Cardiac septum (tissue), 1 donor: ENCODE measurements at regions of chr21 and their contacts with region 1.

Region 1: DNA sequence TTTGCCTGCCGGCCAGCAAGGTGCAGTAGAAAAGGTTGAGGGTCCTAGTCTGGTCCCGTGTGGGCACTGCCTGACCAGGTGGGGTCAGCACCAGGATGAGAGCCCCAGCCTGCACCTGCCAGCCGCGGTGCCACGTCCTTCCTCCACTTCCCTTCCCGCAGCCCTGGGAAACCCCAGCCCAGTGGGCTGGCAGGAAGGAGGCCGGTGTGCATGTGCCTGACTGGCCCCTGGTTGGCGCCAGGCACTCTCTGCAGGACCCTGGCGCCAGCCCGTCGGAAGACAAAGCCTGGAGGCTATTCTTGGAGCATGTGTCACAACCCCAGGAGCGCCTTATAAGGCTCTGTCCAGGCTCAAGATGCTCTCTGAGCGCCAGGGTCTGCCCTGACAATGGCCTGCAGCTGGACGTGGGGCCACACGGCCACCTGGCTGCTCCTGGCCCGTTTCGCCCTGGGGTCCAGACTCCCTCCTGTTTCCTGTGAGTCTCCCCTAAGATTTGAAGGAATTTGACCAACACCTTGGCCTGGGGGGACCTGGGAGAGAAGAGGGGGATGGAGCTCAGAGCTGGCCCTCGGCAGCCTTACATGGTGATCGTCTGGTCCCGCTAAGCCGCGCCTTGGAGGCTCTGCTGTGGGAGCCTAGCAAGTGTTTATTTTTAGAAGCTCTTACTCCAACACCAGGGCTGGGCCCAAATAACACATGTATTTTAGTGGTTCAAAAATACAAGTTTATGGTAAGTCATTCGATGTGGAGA is 31.9 kb upstream of the POFUT2 start:
- DNase-seq: peak; percentile 88

Region 2: DNA sequence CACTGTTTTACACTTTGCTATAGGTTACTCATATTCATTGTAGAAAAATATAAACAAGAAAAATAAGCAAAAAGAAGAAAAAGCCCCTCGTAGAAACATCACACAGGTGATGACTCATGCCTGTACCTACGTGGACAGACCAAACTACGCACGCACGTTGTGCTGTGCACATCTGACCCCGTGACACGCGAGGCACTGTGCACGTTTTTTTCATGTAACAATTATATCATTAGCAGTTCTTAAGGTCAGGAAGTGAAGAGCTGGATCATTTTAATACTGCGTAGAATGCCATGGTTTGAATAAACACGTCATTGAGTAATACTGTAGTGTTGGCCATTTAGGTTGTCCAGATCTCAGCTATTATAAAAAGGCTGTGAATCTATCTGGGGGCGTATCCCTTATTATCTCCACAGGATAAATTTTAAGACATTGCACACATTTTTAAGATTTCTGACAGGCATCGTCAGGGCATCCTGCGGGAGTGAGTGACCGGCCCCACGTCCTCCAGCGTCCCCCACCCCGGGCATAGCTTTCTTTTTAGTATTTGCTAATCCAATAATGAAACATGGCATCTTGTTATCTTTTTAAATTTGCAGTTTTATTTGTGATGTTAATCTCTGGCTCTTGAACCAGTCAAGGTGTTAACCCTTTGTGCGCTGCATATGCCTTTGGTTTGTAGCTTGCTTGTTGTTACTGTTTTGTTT is 268.7 kb before region 1 on chr21:
- intact Hi-C with region 1: no loop called
- DNase-seq: no peak

Region 3: GRCh38 chr21:45302078-45303055 is 17.3 kb before region 1 on chr21:
- intact Hi-C with region 1: loop called (anchors 2 kb)
- DNase-seq: peak; percentile 88

Region 4: DNA sequence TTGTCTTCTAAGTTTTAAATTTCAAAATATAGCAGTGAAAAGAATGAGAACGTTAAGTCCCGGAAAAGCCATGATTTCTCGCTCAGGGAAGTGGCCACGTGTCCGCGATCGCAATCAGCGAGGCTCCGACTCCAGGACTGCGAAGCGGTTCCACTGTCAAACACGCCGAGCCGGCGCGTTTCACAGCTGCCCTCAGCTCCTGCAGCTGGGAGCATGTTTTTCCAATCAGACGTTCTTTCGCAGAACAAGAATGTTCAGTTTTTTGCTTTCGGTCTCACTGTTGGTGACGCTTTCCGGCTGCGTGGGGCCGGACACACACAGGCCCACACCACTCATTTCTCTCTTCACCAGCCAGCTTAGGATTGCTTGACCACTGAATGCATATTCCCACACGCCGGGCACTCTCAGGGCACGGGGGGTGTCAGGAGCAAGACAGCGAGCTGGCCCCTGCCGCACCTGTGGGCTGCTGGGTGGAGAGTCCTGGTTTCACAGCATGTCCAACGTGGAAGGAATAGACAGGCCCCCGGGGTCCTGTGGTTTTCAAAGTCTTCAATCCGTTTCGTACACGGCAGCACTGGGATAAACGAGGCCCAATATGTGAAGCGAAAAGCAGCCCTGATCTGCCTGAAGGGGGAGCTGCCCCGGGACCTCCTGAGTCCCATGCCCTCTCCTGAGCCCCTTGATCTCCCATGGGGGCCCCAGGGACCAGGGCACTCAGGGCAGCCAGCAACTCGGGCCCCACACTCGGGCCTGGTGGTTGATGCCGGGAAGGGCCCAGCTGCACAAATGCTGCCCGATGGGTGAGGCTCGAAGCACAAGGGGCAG is 38.0 kb after region 1 on chr21:
- intact Hi-C with region 1: loop called (anchors 2 kb)
- DNase-seq: no peak

Region 5: GRCh38 chr21:45363921-45364467 is 44.4 kb after region 1 on chr21:
- intact Hi-C with region 1: loop called (anchors 2 kb)
- DNase-seq: peak; percentile 92